ENCODE measurements at regions of chrX and their contacts with region 1.

Region 1: DNA sequence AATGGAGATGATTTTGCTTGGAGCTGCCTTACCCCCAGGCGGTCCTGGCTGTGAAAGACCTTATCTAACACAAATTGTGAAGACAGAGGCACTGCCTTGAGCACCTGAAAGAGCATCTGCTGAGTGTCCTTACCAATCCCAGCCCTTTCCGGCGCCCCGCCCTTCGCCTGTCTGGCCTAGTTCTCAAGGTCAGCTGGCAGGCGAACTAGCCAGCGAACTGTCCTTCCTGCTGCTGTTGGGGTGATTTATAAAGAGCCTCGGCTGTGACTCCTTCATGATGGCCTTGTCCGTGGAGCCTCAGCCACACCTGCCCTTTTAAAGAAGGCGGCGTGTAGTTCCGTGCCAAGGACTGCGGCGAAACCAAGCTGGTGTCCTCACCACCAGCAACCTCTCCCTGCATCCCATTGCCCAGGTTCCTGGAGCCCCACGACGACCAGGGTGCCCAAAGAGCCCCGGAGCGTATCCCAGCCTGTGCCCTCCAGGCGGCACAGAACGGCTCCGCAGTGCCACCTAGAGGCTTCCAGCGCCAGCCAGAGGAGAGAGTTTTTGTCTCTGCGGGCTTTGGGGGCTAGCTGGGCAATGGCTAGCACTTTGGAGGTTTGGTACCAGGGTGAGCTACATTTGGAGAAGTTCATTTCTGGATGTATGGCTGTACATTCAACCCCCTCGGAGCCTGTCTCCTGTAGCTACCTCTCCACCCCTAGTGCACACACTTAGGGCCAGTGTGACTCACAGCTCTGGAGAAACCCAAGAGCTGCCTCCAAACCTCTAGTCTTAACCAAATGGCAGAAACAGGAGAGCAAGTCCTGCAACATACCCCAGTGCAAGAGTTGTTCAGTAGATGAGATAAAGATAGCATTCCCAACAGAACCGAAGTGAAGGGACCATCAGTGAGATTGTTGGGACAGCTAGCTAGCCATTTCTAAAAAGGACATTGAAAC is 36.8 kb upstream of the VMA21 start:
- H3K4me3 ChIP-seq: no peak overlapping the region
- H3K27ac ChIP-seq: no peak overlapping the region
- H3K4me1 ChIP-seq: no peaks in the 10 kb centered on the region
- CTCF ChIP-seq: peak; percentile 49; the same call in 1 of the 2 replicates

Region 2: DNA sequence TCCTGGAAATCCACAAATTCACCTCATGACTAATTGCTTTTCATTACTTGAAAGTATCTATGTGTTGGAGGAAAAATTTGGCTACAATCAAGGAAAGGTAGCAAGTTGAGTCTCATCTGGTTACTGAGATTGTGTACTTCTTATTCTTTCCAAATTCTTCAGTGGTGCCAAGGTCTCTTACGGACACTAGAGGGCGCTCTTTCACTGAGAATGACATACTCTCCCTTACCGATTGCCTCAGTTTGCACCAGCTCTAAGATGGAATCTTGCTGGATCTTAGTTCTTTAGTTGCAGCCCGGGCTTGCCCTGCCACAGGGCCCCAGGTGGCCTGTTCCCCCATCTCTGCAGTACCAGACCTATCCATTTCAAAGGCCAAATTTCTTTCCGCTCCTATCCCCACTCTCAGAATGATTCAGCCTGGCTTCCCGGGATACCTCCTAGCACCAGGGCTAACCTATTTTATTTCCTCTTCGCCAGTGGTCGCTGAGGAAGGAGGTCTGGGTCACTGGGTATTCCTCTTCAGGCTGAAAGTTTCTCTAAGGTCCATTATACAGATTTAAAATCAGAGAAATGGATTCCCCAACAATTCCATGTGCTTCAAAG is 208.4 kb before region 1 on chrX:
- CTCF ChIA-PET with region 1: interaction called, 16 read pairs
- POLR2A ChIA-PET with region 1: no interaction called
- H3K4me3 ChIP-seq: no peak overlapping the region
- H3K27ac ChIP-seq: no peak overlapping the region
- H3K4me1 ChIP-seq: no peaks in the 10 kb centered on the region
- CTCF ChIP-seq: peak; percentile 81

Region 3: GRCh38 chrX:151346931-151347543 is 13.2 kb before region 1 on chrX:
- CTCF ChIA-PET with region 1: interaction called, 11 read pairs
- POLR2A ChIA-PET with region 1: no interaction called
- H3K4me3 ChIP-seq: no peak overlapping the region
- H3K27ac ChIP-seq: no peak overlapping the region
- H3K4me1 ChIP-seq: no peaks in the 10 kb centered on the region
- CTCF ChIP-seq: no peak